Activated CD8-positive, alpha-beta T cell treated with anti-CD3 and anti-CD28 coated beads for 36 hours (primary cell): ENCODE measurements at regions of chr9 and their contacts with region 1.

Region 1: DNA sequence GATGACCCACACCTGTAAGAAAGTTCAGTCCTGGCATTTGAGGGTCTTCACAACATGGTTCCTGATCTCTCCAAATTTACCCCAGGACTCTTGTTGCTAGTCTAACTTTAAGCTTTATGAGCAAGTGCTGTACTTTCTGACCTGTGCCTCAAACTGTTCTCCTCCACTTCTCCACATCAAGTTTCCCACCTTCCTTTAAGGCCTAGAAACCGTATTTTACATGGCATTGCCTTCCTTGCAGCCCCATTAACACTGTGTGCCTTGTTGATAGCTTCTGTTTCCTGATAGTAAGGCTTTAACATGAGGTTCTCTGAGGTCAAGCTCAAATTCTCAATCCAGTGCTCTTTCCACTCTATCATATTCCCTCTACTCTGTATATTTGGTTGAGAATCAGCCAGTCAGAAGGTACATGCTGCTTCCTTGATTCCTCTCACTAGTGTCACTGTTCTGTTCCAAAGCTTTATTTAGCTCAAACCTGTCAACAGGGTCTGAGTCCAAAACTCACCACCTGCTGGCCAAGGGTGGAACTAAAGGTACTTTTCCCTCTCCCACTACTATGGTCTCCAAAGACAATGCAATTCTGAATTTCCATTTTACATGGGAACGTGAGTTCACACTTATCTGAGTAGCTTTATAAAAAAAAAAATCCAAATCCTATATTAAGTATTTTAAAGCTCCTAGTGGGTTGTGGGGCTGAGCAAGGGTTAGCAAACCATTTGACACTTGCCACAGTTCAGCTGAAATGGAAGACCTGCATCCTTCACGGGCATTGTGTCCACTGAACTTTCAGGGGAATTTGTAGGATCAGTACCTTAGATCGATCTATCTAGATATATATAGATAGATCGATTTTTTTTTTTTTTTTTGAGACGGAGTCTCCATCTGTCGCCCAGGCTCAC is 21.1 kb downstream of the VCP start:
- DNase-seq: peak; percentile 73
- ATAC-seq: peak; percentile 80
- H3K4me3 Mint-ChIP-seq: no peak overlapping the region
- H3K27ac Mint-ChIP-seq: peak overlapping the region; percentile 49
- H3K4me1 Mint-ChIP-seq: no peaks in the 10 kb centered on the region
- H3K27me3 Mint-ChIP-seq: no peaks in the 10 kb centered on the region
- CTCF ChIP-seq: peak; percentile 79

Region 2: GRCh38 chr9:34522971-34523797 is 528.1 kb before region 1 on chr9 and contains the start of gene ENHO:
- CTCF ChIA-PET with region 1: no interaction called
- POLR2A ChIA-PET with region 1: no interaction called
- intact Hi-C with region 1: no loop called
- DNase-seq: peak; percentile 86
- ATAC-seq: peak; percentile 99
- H3K4me3 Mint-ChIP-seq: peak within 1 kb of the TSS; percentile 50
- H3K27ac Mint-ChIP-seq: no peak within 1 kb of the TSS
- H3K4me1 Mint-ChIP-seq: peaks cover 23% of the 10 kb centered on the region
- H3K27me3 Mint-ChIP-seq: peaks cover 10% of the 10 kb centered on the region
- CTCF ChIP-seq: no peak
- total RNA-seq, gene ENHO: not detected

Region 3: DNA sequence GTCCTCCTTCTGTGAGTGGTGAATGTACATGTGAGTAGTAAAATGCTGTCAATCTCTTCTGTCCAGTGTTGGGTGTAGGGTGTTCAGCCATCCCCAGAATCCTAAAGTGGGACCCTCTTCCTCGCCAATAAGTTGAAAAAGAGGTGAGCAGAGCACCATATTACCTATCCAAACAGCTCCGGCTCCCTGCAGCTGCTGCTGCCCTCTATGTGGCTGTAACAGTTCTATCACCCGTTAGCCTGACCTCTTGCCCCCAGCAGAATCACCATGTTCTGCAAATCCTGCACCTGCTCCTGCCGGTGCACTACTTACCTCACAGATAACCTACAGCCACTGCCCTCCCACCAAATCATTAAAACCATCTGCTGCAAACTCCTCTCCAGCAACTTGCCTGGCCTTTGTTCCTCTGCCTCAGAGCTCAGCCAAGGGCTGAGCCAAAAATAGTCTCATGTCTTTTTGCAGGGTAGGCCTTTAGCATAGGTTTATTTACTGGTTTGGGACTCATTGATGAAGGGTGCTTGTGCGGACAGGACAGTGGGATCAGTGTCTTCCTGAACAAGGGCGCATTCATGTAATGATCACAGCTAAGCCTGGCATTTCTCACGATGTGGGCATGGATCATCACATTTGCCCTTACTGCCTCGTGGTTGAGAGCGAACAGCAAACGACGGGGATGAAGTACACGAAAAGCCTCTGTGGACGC is 291.7 kb before region 1 on chr9:
- CTCF ChIA-PET with region 1: interaction called, 14 read pairs
- POLR2A ChIA-PET with region 1: no interaction called
- intact Hi-C with region 1: no loop called
- DNase-seq: no peak
- ATAC-seq: no peak
- H3K4me3 Mint-ChIP-seq: no peak overlapping the region
- H3K27ac Mint-ChIP-seq: no peak overlapping the region
- H3K4me1 Mint-ChIP-seq: peaks cover 5% of the 10 kb centered on the region
- H3K27me3 Mint-ChIP-seq: peaks cover 30% of the 10 kb centered on the region
- CTCF ChIP-seq: no peak

Region 4: GRCh38 chr9:34989003-34989945 is 62.0 kb before region 1 on chr9 and contains the start of gene DNAJB5:
- CTCF ChIA-PET with region 1: interaction called, 24 read pairs
- POLR2A ChIA-PET with region 1: no interaction called
- intact Hi-C with region 1: no loop called
- DNase-seq: peak; percentile 98
- ATAC-seq: peak; percentile 85
- H3K4me3 Mint-ChIP-seq: peak within 1 kb of the TSS; percentile 80
- H3K27ac Mint-ChIP-seq: peak within 1 kb of the TSS; percentile 91
- H3K4me1 Mint-ChIP-seq: peaks cover 72% of the 10 kb centered on the region
- H3K27me3 Mint-ChIP-seq: no peaks in the 10 kb centered on the region
- CTCF ChIP-seq: no peak
- total RNA-seq, gene DNAJB5: 14.6 to 16.4 TPM

Region 5: DNA sequence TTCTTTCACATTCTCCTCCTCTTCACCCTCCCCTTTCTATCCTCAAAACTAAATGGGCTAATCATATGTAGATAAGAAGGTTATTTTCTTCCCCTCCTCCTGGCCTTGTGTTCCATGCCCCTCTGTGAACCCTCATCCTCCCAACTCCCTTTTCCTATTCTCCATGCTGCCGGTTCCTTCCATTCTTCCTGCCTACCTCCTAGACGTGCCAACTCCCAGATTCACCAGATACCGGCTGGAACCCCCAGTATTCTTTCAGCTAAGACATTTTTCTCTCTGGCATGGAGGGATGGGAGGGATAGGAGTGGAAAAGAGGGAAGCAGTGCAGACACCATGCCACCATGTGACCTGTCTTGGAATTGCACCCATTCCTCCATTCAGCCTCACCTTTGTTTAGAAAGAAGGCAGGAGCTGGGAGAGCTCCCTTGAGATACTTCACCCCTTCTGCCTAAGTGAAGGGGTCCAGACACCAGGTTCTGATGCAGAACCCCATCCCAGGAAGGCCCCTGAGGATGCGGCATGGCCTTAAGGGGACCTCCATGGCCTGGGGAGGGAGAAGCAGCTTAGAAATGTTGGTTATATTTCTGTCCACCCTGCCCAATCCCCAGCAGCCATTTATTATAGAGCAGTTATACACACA is 56.9 kb before region 1 on chr9:
- CTCF ChIA-PET with region 1: interaction called, 10 read pairs
- POLR2A ChIA-PET with region 1: no interaction called
- intact Hi-C with region 1: no loop called
- DNase-seq: no peak
- ATAC-seq: no peak
- H3K4me3 Mint-ChIP-seq: no peak overlapping the region
- H3K27ac Mint-ChIP-seq: peak overlapping the region; percentile 86
- H3K4me1 Mint-ChIP-seq: peaks cover 53% of the 10 kb centered on the region
- H3K27me3 Mint-ChIP-seq: no peaks in the 10 kb centered on the region
- CTCF ChIP-seq: peak; percentile 62

Region 6: GRCh38 chr9:35029852-35030251 is 21.5 kb before region 1 on chr9:
- CTCF ChIA-PET with region 1: interaction called, 11 read pairs
- POLR2A ChIA-PET with region 1: interaction called, 3 read pairs
- intact Hi-C with region 1: no loop called
- DNase-seq: no peak
- ATAC-seq: no peak
- H3K4me3 Mint-ChIP-seq: no peak overlapping the region
- H3K27ac Mint-ChIP-seq: no peak overlapping the region
- H3K4me1 Mint-ChIP-seq: no peaks in the 10 kb centered on the region
- H3K27me3 Mint-ChIP-seq: no peaks in the 10 kb centered on the region
- CTCF ChIP-seq: no peak